Mammary epithelial cell (primary cell): ENCODE measurements at regions of chr5 and their contacts with region 1.

Region 1: DNA sequence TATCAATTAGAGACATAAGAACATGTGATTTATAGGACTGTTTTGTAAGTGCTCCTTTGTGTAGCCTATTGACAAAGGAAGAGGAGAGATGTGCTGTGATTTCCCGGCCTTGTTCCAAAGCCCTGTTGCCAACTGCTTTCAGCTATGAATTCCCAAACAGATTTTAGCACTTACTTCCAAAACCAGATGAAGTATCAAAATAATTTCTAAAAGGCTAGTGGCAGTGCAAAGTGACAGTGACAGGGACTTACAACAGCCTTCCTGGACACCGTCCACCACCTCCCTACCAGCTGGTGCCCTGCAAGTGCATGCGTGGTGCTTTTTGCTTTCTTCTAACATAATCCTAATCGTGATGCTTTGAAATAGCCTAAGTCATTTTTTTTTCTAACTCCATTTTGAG is 254.1 kb upstream of the ACTBL2 start:
- DNase-seq: no peak
- H3K4me3 ChIP-seq: no peak overlapping the region
- H3K27ac ChIP-seq: peak overlapping the region; percentile 93
- H3K4me1 ChIP-seq: peaks cover 35% of the 10 kb centered on the region
- H3K27me3 ChIP-seq: no peaks in the 10 kb centered on the region
- CTCF ChIP-seq: no peak

Region 2: DNA sequence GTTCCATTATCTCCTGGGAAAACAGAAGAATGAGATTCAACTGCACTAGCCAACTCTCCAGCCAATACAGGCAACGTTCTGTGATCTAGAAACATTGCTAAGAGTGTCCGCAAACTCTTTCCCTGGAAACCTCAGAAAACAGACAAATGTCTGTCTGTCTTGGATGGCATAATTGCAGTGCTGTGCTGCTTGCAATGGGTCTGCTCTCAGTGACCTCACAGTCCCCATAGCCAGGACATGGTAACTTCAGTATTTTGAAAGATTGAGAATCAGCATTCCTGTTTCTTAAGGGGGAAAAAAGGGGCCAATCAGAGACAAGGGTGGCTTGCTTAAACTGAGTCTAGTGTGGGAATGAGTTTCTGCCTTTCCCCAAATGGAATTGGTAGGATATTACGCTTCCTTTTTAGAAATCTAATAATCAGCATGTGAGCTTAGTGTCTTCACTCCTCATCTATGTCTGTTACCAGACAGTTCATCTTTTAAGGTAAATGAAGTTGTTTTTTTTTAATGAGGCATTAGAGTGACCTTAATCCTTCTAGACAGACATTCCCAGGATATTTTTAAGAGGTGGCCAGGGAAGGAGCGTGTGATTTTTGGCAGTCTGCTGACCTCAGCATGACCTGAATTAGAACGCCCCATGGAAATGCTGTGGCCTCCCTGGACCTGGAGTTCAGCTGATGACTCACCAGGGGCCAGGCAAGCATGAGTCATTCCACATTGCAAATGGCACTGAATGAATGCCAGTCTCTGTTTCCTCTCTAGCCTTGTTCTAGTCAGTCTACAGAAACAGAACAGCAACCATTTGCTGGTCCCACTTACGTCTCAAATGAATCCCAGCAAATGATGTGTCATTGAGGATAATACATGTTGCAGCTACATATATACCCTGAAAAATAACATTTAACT is 43.9 kb before region 1 on chr5:
- CTCF ChIA-PET with region 1: no interaction called
- dilution Hi-C with region 1: loop called (anchors 5 kb)
- in situ Hi-C with region 1: no loop called
- intact Hi-C with region 1: loop called (anchors 5 kb)
- DNase-seq: peak; percentile 98
- H3K4me3 ChIP-seq: peak overlapping the region in 2 of 3 experiments; percentile 36 to 48
- H3K27ac ChIP-seq: peak overlapping the region; percentile 90
- H3K4me1 ChIP-seq: peaks cover 44% of the 10 kb centered on the region
- H3K27me3 ChIP-seq: no peaks in the 10 kb centered on the region
- CTCF ChIP-seq: no peak

Region 3: DNA sequence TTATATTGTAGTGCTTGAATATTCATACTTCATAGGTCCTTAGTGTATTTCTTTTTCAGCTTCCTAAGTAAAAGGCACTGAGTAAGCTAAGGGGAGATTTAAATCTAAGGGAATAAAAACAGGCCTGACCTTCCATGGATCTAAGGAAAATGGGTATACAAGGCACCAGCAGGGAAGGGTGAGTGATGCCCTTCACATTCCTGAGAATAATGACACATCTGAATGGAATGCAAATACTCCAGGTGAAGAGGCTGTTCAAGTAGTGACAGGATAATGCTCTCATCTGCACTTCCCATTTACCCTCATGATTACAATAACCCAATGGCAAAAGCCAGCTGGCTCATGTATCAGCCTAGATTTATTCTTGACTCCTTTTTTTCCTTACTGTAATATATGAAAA is 37.9 kb before region 1 on chr5:
- CTCF ChIA-PET with region 1: no interaction called
- dilution Hi-C with region 1: loop called (anchors 5 kb)
- in situ Hi-C with region 1: no loop called
- intact Hi-C with region 1: loop called (anchors 5 kb)
- DNase-seq: peak; percentile 92
- H3K4me3 ChIP-seq: no peak overlapping the region
- H3K27ac ChIP-seq: peak overlapping the region; percentile 75
- H3K4me1 ChIP-seq: peaks cover 44% of the 10 kb centered on the region
- H3K27me3 ChIP-seq: no peaks in the 10 kb centered on the region
- CTCF ChIP-seq: no peak